WTC11 (cell line): ENCODE measurements at regions of chr3 and their contacts with region 1.

Region 1: DNA sequence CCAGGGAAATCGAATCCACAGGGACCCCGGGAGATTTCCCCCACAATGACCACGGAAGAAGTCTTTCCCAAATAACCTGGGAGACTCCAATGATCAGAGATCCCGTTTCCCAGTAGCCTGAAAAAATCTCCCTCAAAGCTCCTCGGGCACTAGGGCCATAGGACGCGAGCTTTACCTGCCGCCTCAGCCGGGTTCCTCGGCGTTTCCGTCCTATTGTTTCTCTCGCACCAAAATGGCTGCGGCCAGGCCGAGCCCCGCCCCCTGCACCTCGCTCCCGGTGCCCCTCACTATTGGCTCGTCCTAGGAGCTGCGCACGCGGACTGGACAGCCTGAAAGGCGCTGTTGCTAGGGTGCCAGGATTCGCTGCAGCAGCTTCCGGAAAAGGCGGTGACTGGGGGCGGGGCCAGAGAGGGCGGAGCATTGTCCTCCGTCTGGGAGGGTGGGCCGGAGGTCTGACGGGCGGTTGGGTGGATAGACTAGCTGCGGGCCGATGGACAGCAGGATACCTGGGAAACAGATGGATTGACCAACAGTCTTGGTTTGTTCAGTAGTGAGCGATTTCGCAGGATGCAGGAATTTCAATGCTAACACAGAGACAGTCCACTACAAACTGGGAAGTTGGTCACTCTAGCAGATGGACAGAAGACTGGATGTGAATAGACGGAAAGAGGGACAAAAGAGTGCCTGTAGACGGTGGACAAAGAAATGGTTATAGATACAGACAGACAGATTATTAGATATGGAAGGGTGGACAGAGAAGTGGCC is at the start of gene IP6K2:
- DNase-seq: peak; percentile 100
- ATAC-seq: peak; percentile 98
- H3K4me3 Mint-ChIP-seq: peak within 1 kb of the TSS; percentile 98
- H3K27ac Mint-ChIP-seq: peak within 1 kb of the TSS; percentile 99
- H3K4me1 Mint-ChIP-seq: peaks cover 30% of the 10 kb centered on the region
- H3K27me3 Mint-ChIP-seq: peaks cover 14% of the 10 kb centered on the region
- CTCF ChIP-seq: no peak
- total RNA-seq, gene IP6K2: 113 to 123 TPM (median 114 TPM) in 3 replicates

Region 2: DNA sequence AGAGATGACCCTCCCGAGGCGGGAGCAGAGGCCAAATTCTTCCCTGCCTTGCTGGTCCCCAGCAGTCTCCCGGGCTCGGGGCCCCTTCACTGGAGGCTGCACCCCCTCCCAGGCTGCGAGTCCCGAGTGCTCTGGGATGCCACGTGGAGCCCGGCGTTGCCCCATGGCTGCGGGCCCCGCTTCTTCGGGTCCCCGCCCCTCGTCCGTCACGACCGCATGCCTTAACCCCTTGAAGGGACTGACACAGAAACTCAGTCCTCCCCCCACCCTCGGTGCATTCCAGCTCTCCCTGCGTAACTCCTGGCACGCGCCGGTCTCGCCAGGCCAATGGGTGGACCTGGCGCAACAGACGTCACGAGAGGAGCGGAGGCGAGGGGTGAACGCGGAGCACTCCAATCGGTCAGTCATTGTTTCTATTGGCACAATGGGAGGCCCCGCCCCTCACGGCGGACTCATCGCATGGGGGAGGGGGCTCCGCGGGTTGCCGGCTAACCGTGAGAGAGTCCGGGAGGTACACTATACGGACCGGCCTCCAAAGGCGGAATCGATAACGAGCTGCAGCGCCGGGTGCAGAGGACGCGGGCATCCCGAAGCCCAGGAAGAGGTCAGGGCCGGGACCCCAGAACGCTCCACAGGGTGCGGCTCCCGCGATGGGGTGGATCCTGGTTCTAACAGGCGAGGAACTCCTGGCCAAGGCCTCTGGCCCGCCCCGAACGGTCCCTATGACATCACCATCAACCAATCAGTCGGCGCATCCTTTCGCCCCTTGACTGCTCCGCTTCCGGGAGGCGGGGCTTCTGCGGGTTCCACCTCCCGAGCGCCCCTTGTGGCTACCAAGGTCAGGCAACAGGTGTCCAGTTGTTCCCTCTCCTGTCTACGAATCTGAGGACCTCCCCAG is 53.5 kb before region 1 on chr3:
- CTCF ChIA-PET with region 1: interaction called, 4 read pairs
- POLR2A ChIA-PET with region 1: interaction called, 25 read pairs
- DNase-seq: peak; percentile 99
- ATAC-seq: peak; percentile 79
- H3K4me3 Mint-ChIP-seq: peak overlapping the region; percentile 88
- H3K27ac Mint-ChIP-seq: peak overlapping the region; percentile 100
- H3K4me1 Mint-ChIP-seq: peaks cover 14% of the 10 kb centered on the region
- H3K27me3 Mint-ChIP-seq: no peaks in the 10 kb centered on the region
- CTCF ChIP-seq: peak; percentile 64; the same call in 1 of the 2 replicates

Region 3: DNA sequence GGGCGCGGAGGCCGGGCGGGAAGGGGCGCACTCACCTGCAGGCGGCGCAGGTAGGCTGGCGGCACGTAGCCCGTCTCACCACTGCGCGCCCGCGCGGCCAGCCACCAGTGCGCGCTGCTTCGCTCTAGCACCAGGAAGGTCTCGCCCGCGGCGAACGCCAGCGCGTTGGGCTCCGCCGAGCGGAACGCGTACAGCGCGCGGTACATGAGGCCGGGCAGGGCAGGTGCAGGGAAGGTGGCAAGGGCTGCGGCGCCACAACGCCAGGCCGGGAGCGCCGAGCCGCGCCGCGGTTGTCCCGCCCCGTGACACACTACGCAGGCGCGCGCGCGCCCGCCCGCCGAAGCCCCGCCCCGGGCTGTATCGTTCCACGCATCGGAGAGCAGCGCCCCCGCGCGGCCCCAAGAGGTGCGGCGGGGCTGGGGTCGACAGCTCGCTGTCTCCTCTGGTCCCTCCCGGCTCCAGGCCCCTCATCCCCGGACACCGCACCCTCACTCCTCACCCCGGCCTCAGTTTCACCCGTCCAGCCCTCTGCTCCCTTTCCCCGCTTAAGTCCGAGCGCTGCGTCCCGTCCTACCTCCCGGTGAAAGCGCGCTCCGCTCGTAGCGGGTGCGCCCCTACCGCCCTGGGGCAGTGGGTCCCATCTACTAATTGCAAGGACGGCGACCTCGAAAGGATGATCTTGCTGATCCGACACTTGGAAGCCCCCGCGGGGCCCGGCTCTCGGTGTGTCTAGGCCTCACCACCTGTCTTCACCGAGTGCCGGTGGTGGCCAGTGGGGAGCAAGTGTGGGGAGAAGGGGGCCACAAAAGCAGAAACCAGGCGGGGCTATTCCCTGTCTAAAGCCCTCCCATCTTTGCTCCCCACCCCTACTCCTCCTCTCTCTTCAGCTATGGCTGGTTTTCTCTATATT is 31.3 kb before region 1 on chr3 and contains the start of gene NCKIPSD:
- CTCF ChIA-PET with region 1: interaction called, 13 read pairs
- POLR2A ChIA-PET with region 1: interaction called, 4 read pairs
- DNase-seq: peak; percentile 91
- ATAC-seq: peak; percentile 88
- H3K4me3 Mint-ChIP-seq: peak within 1 kb of the TSS; percentile 89
- H3K27ac Mint-ChIP-seq: peak within 1 kb of the TSS; percentile 27
- H3K4me1 Mint-ChIP-seq: peaks cover 16% of the 10 kb centered on the region
- H3K27me3 Mint-ChIP-seq: no peaks in the 10 kb centered on the region
- CTCF ChIP-seq: peak; percentile 82
- total RNA-seq, gene NCKIPSD: 40.1 to 50.1 TPM (median 47.1 TPM) in 3 replicates

Region 4: DNA sequence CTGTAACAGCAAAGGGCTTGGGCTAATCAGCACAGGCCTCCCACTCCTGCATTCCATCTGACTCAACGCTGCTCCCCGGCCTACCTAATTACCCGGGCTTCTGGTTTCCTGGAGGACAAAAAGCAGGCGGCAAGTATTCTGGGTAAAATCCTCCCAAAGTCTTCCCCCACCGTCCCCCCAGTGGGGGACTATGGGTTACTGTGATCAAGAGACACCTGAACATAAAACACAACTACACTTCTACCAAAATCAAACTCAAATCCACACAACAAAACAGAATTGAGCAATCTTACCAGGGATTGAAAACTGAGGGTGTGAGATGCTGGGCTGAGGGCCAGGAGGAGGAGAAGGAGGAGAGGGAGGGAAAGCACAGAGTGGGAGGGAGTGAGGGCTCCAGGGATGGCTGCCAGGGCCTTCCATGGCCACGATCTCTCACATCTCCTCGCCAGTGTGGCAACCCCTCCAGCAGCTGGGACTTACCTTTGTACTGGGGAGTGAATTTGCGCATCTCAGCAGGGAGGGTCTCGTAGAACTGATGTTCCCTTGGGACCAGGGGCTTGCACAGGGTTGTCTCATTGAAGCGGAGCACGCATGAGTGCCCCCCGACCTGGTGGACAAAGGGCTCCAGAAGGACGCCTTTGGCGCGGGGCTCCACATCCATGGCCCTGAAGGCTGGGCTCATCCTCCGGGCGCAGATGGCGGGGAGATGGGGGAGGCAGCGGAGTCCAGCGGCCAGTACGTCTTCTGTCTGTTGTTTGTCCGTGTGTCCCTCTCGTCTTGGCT is 22.4 kb before region 1 on chr3:
- CTCF ChIA-PET with region 1: interaction called, 5 read pairs
- POLR2A ChIA-PET with region 1: interaction called, 10 read pairs
- DNase-seq: peak; percentile 20
- ATAC-seq: peak; percentile 26
- H3K4me3 Mint-ChIP-seq: peak overlapping the region; percentile 42
- H3K27ac Mint-ChIP-seq: peak overlapping the region; percentile 94
- H3K4me1 Mint-ChIP-seq: peaks cover 24% of the 10 kb centered on the region
- H3K27me3 Mint-ChIP-seq: no peaks in the 10 kb centered on the region
- CTCF ChIP-seq: no peak

Region 5: DNA sequence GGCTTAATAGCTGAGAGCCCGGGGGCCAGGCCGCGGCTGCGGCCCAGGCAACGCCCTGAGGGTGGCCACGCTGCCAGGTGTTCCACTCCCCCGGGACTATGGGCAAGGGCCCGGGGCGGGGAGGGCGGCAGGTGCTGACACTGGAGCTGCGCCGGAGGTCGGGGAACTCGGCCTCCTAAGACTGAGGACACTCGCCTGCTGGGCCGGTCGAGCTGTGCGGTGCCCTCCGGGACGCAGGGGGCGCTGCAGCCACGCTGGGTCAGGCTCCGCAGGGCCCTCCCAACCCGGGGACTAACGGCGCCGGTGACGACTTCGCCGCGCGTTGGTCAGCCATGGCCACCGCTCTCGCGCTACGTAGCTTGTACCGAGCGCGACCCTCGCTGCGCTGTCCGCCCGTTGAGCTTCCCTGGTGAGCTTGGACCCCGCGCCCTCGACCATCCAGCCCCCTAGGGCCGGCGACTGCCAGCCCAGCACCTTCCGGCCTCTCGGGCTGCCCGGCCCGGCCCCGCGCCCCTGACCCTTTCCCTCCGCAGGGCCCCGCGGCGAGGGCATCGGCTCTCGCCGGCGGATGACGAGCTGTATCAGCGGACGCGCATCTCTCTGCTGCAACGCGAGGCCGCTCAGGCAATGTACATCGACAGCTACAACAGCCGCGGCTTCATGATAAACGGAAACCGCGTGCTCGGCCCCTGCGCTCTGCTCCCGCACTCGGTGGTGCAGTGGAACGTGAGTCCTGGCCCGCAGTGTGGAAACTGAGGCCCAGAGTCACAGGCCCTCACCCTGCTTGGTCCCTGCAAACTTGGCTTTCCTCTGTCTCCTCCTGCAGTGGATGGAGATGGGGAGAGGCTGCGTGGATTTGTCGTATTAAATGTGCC is 304.9 kb after region 1 on chr3 and contains the start of gene NDUFAF3:
- CTCF ChIA-PET with region 1: interaction called, 8 read pairs
- POLR2A ChIA-PET with region 1: interaction called, 11 read pairs
- DNase-seq: peak; percentile 97
- ATAC-seq: peak; percentile 71
- H3K4me3 Mint-ChIP-seq: peak within 1 kb of the TSS; percentile 92
- H3K27ac Mint-ChIP-seq: peak within 1 kb of the TSS; percentile 98
- H3K4me1 Mint-ChIP-seq: peaks cover 29% of the 10 kb centered on the region
- H3K27me3 Mint-ChIP-seq: no peaks in the 10 kb centered on the region
- CTCF ChIP-seq: peak; percentile 88
- total RNA-seq, gene NDUFAF3: 36.8 to 50.3 TPM (median 49.6 TPM) in 3 replicates